PC-9 (cell line): ENCODE measurements at regions of chr2 and their contacts with region 1.

Region 1: DNA sequence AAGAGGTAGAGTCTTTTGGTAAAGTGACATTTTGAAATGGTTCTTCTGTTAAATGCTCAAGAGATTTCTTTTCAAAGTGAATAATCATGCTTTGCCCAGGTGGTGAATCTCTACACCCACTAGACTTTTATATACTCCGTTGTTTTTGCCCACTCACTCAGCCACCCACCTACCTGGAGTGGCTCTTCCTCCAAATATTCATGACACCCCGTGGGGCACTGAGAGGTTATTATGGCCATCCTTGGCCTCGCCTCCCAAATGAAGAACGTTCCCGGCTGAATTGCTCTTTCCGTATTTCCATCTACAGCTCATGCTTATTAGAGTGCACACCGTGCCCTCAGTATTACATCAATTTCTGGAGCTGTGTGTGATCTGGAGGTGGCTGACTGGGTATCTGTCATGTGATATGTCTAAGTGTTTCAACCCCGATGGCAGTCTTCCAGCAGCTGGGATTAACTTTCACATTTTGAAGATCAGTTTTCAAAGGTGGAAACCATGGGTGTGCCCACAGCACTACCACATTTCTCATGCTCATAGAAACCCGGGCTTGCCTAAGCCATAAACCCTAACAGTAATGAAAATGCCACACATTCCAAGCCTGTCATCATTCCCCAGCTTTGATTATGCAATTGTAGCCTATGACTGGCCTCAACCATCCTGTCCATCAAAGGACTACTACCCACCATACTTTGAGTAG is 406.6 kb upstream of the MMADHC start:
- DNase-seq: peak; percentile 89 to 95
- H3K4me3 ChIP-seq: no peak overlapping the region
- H3K27ac ChIP-seq: peak overlapping the region; percentile 82
- H3K4me1 ChIP-seq: peaks cover 30% of the 10 kb centered on the region
- H3K27me3 ChIP-seq: no peaks in the 10 kb centered on the region
- CTCF ChIP-seq: no peak

Region 2: DNA sequence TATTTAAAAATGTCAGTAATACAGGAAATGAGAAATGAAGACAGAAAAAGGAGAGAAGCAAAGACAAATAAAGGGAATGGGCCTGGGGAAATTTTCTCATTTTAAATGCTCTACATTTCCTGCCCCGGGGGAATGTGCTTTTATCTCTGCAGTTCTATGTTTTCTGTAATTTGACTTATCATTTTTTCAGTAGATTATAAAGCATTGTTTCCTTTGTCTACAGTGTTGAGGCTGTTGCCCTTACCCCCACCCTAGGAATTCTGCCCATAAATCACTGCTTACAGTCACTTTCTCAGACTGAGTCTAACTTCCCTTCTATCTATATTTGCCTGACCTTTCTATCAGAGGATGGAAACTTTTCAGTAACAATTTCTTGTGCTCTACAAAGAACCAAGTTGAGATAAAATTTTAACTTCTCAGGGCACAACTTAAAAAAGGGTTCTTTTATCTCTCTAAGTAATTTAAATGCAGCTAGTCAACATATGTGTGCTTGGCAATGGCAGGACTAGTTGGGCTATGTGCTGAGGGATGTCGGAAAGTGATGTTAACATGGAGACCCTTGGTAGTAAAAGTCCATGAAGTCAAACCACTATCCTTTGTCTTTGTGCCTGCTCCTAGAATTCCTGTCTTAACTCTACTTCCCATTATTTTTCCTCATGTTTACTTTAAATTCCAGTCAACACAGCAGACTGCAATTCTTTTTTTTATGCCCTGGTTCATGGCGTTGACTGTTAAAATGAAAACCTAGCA is 260.1 kb before region 1 on chr2:
- CTCF ChIA-PET with region 1: no interaction called
- POLR2A ChIA-PET with region 1: no interaction called
- intact Hi-C with region 1: loop called (anchors 2 kb)
- DNase-seq: peak; percentile 45 to 48
- H3K4me3 ChIP-seq: no peak overlapping the region
- H3K27ac ChIP-seq: no peak overlapping the region
- H3K4me1 ChIP-seq: peaks cover 5% of the 10 kb centered on the region; the same call in 1 of the 2 replicates
- H3K27me3 ChIP-seq: no peaks in the 10 kb centered on the region
- CTCF ChIP-seq: no peak

Region 3: GRCh38 chr2:150012986-150013385 is 18.8 kb after region 1 on chr2:
- CTCF ChIA-PET with region 1: no interaction called
- POLR2A ChIA-PET with region 1: no interaction called
- intact Hi-C with region 1: no loop called
- DNase-seq: no peak
- H3K4me3 ChIP-seq: no peak overlapping the region
- H3K27ac ChIP-seq: no peak overlapping the region
- H3K4me1 ChIP-seq: no peaks in the 10 kb centered on the region
- H3K27me3 ChIP-seq: no peaks in the 10 kb centered on the region
- CTCF ChIP-seq: no peak

Region 4: GRCh38 chr2:150133623-150134022 is 139.4 kb after region 1 on chr2:
- CTCF ChIA-PET with region 1: no interaction called
- POLR2A ChIA-PET with region 1: no interaction called
- intact Hi-C with region 1: loop called (anchors 1 kb)
- DNase-seq: peak; percentile 49 to 81
- H3K4me3 ChIP-seq: no peak overlapping the region
- H3K27ac ChIP-seq: peak overlapping the region; percentile 74
- H3K4me1 ChIP-seq: peaks cover 5% of the 10 kb centered on the region; the same call in 1 of the 2 replicates
- H3K27me3 ChIP-seq: no peaks in the 10 kb centered on the region
- CTCF ChIP-seq: no peak

Region 5: GRCh38 chr2:150160058-150160457 is 165.9 kb after region 1 on chr2:
- CTCF ChIA-PET with region 1: no interaction called
- POLR2A ChIA-PET with region 1: no interaction called
- intact Hi-C with region 1: no loop called
- DNase-seq: no peak
- H3K4me3 ChIP-seq: no peak overlapping the region
- H3K27ac ChIP-seq: no peak overlapping the region
- H3K4me1 ChIP-seq: peaks cover 5% of the 10 kb centered on the region
- H3K27me3 ChIP-seq: no peaks in the 10 kb centered on the region
- CTCF ChIP-seq: no peak

Region 6: DNA sequence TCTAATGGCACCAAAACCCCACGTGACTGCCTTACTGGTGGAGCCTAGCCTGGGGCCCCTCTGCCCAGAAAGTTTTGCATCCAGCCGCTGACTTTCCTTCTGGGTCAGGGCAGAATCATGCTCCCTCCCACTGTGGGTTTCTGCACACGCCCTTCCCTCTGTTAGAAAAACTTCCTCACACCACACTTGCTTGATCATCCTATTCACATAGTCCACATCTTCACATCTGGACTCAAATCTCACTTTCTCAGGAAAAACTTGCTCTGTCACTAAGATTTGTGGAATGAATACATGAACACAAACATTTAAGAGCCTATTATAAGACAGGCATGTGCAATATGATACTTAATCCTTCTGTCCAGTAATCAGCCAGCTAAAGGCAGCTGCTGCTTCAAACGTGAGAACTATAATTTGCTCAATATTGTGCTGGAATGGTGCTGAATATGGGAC is 218.5 kb after region 1 on chr2:
- CTCF ChIA-PET with region 1: no interaction called
- POLR2A ChIA-PET with region 1: interaction called, 12 read pairs
- intact Hi-C with region 1: no loop called
- DNase-seq: no peak
- H3K4me3 ChIP-seq: no peak overlapping the region
- H3K27ac ChIP-seq: no peak overlapping the region
- H3K4me1 ChIP-seq: peaks cover 15% of the 10 kb centered on the region
- H3K27me3 ChIP-seq: no peaks in the 10 kb centered on the region
- CTCF ChIP-seq: no peak

Region 7: GRCh38 chr2:150478200-150478974 is 484.2 kb after region 1 on chr2:
- CTCF ChIA-PET with region 1: no interaction called
- POLR2A ChIA-PET with region 1: interaction called, 5 read pairs
- intact Hi-C with region 1: loop called (anchors 1 kb)
- DNase-seq: peak; percentile 63 to 79
- H3K4me3 ChIP-seq: peak overlapping the region; percentile 34; the same call in 1 of the 2 replicates
- H3K27ac ChIP-seq: peak overlapping the region; percentile 93
- H3K4me1 ChIP-seq: peaks cover 100% of the 10 kb centered on the region
- H3K27me3 ChIP-seq: no peaks in the 10 kb centered on the region
- CTCF ChIP-seq: no peak

Region 8: DNA sequence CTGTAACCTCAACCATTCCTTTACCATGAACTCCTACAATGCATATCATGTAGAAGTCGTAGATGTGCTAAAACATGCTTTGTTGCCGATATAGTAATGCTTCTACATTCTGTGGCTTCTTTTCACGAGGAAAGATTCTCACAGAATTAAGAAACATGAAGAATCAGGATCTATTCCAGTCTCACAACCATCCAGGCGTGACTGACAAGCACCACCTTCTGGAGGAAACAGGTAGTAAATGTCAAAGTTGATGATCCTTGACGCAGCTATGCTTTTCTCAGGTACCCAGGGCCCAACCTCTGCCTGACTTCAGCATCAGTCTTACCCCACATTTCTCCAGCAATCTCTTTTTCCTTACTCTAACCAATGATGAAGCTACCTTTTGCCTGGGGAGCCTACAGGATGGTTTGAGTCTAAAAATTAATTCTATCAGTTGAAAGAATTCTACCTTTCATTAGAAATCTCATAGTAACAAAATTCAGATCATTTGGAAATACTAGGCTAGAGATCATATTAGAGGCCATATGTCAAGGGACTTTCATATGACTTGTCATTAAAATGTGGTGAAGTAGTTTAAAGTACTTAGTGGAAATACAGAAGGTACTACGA is 616.6 kb after region 1 on chr2:
- CTCF ChIA-PET with region 1: no interaction called
- POLR2A ChIA-PET with region 1: no interaction called
- intact Hi-C with region 1: loop called (anchors 1 kb)
- DNase-seq: peak; percentile 35 to 56
- H3K4me3 ChIP-seq: no peak overlapping the region
- H3K27ac ChIP-seq: no peak overlapping the region
- H3K4me1 ChIP-seq: no peaks in the 10 kb centered on the region
- H3K27me3 ChIP-seq: no peaks in the 10 kb centered on the region
- CTCF ChIP-seq: peak; percentile 66